ENCODE measurements at regions of chr15 and their contacts with region 1.

Region 1: GRCh38 chr15:74433592-74434262 is at the start of gene SEMA7A:
- DNase-seq: peak; percentile 64 to 89
- H3K4me3 ChIP-seq: peak within 1 kb of the TSS; percentile 56 to 87
- H3K27ac ChIP-seq: peak within 1 kb of the TSS; percentile 33 to 49
- H3K4me1 ChIP-seq: peaks cover 0 to 19% (median 18%) of the 10 kb centered on the region in 4 donors
- H3K27me3 ChIP-seq: peaks cover 0 to 47% of the 10 kb centered on the region in 2 donors
- CTCF ChIP-seq: no peak

Region 2: DNA sequence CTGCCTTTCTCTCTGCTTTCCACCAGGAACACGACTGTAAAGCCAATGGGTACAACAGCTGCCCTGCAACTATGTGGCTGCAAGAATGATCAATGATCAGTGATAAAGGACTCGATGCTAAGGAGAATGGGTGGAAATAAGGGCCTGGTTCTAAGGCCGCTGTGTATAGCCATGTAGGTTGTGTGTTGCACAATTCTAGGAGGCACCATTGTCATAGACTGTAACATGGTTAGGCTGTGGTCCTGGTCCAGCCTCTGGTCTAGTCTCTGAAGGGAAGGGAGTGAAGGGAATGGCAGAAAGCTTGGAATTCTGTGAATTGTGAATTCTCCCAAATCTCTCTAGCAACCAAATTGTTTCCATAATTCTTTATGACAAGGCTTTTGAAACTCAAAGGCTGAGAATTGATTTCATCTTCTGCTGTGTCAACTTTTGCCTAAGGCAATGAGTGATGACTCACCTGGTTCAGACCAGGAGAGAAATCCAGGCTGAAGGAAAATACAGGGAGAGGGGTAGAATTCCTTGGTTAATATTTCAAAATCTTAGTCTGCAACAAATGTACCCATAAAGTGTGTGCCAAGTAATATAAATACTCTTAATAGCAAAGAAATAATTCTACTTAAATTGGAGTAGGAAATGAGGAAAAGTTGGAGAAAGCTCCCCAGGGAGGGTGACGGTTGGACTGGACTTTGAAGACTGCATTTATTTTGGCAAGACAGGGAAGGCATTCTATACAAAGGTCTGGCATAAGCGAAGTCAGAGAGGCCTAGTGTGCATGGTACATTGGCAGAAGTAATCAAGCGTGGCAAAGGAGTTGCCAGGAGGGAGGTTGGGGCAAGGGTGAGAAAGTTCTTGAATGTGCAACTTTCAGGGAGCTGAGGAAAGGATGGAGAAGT is 1567.5 kb before region 1 on chr15:
- intact Hi-C with region 1: no loop called
- DNase-seq: no peak
- H3K4me3 ChIP-seq: no peak overlapping the region
- H3K27ac ChIP-seq: no peak overlapping the region
- H3K4me1 ChIP-seq: no peaks in the 10 kb centered on the region
- H3K27me3 ChIP-seq: no peaks in the 10 kb centered on the region
- CTCF ChIP-seq: no peak

Region 3: DNA sequence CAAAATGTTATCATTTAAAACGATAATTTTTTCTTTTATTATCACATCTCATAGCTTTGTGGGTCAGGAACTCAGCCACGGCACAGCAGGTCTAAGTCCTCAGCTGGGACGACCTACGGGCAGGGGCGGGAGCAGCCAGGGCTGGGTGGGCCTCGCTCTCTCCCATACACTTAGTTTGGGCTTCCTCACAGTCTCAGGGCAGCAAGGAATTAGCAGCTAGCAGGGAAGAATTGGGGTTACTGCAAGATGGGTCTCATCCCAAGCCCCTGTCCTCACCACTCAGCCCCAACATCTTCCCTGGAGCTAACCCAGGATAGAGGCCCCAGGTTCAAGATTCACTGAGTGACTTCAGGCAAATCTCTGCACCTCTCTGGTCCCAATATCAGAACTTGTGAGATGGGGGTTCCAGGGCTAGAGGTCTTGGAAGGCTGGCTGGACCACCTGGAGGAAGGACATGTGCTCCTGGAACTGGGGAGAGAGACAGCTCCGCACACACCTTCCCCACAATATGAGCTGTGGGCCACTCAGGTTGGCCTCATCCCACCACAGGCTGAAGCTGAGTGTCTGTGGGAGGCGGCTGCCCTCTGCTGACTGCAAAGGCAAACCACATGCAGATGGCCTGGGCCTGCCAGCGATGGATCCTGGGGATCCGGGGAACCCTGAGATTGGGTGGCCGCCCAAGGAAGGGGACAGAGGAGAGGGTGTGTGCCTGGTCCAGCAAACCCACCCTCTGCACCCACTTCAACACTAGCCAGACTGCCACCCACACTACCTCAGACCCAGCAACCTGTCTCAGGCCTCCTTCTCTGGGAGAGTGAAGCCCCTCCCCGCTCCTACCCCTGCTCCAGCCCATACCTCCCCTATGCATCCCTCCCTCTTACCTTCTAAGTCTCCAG is 111.3 kb before region 1 on chr15:
- intact Hi-C with region 1: no loop called
- DNase-seq: peak; percentile 69 to 79
- H3K4me3 ChIP-seq: no peak overlapping the region
- H3K27ac ChIP-seq: no peak overlapping the region
- H3K4me1 ChIP-seq: peaks cover 0 to 31% (median 18%) of the 10 kb centered on the region in 4 donors
- H3K27me3 ChIP-seq: peaks cover 0 to 4% of the 10 kb centered on the region in 2 donors
- CTCF ChIP-seq: peak; percentile 78 to 87

Region 4: GRCh38 chr15:74373731-74374647 is 59.7 kb before region 1 on chr15:
- intact Hi-C with region 1: loop called (anchors 2 kb)
- DNase-seq: peak; percentile 92 to 94
- H3K4me3 ChIP-seq: peak overlapping the region; percentile 56 to 58
- H3K27ac ChIP-seq: peak overlapping the region in 1 of 2 donors; percentile 8
- H3K4me1 ChIP-seq: peaks cover 0 to 19% (median 12%) of the 10 kb centered on the region in 4 donors
- H3K27me3 ChIP-seq: peaks cover 0 to 43% of the 10 kb centered on the region in 2 donors
- CTCF ChIP-seq: peak; percentile 85 to 87

Region 5: GRCh38 chr15:74382004-74382816 is 51.5 kb before region 1 on chr15:
- intact Hi-C with region 1: loop called (anchors 2 kb)
- DNase-seq: peak; percentile 79 to 85
- H3K4me3 ChIP-seq: no peak overlapping the region
- H3K27ac ChIP-seq: no peak overlapping the region
- H3K4me1 ChIP-seq: peaks cover 0 to 8% (median 0%) of the 10 kb centered on the region in 4 donors
- H3K27me3 ChIP-seq: peaks cover 0 to 32% of the 10 kb centered on the region in 2 donors
- CTCF ChIP-seq: peak; percentile 82 to 87

Region 6: DNA sequence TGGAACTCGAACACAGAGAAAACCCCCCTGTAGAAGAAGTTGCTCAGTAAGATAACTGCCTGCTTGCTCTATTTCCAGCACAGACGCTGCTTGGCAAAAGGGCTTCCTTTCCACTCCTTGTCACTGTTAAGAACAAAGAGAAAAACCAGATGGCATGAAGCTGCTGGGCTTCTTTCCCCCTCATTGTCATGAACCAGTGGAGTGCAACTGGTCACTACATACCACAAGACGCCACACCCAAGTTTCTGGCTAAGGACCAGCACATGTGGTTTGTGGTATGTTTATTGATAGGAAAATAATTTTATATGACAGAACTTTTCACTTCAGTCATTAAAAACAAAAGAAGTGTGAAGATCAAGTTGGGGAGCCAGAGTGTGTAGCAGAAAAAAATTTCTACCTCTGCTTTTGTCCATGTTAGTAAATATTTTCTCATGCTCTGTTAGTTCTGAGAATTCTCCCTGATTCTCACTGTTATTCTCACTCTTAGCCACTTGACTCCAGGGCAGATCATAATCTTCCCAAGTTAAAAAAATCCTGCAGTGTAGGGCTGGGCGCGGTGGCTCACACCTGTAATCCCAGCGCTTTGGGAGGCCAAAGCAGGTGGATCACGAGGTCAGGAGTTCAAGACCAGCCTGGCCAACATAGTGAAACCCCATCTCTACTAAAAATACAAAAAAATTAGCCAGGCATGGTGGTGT is 219.8 kb after region 1 on chr15:
- intact Hi-C with region 1: no loop called
- DNase-seq: no peak
- H3K4me3 ChIP-seq: no peak overlapping the region
- H3K27ac ChIP-seq: no peak overlapping the region
- H3K4me1 ChIP-seq: peaks cover 0 to 30% (median 9%) of the 10 kb centered on the region in 4 donors
- H3K27me3 ChIP-seq: no peaks in the 10 kb centered on the region
- CTCF ChIP-seq: no peak